ENCODE measurements at regions of chr3 and their contacts with region 1.

Region 1: GRCh38 chr3:195204360-195205163 is 66.4 kb downstream of the XXYLT1 start:
- DNase-seq: peak in 1 of 5 donors; percentile 16
- H3K4me3 ChIP-seq: no peak overlapping the region
- H3K27ac ChIP-seq: no peak overlapping the region
- H3K4me1 ChIP-seq: peaks cover 23% of the 10 kb centered on the region
- H3K27me3 ChIP-seq: no peaks in the 10 kb centered on the region
- CTCF ChIP-seq: no peak
- EP300 ChIP-seq: no peak
- POLR2A ChIP-seq: no peak

Region 2: GRCh38 chr3:195110647-195111318 is 93.8 kb before region 1 on chr3:
- intact Hi-C with region 1: no loop called
- DNase-seq: no peak
- H3K4me3 ChIP-seq: no peak overlapping the region
- H3K27ac ChIP-seq: no peak overlapping the region
- H3K4me1 ChIP-seq: peaks cover 4% of the 10 kb centered on the region
- H3K27me3 ChIP-seq: no peaks in the 10 kb centered on the region
- CTCF ChIP-seq: no peak
- EP300 ChIP-seq: no peak
- POLR2A ChIP-seq: no peak

Region 3: GRCh38 chr3:195154793-195155535 is 49.6 kb before region 1 on chr3:
- intact Hi-C with region 1: loop called in 1 of 4 experiments (anchors 10 kb)
- DNase-seq: peak; percentile 89 to 98 (median 92)
- H3K4me3 ChIP-seq: no peak overlapping the region
- H3K27ac ChIP-seq: peak overlapping the region; percentile 48 to 74
- H3K4me1 ChIP-seq: peaks cover 12% of the 10 kb centered on the region
- H3K27me3 ChIP-seq: no peaks in the 10 kb centered on the region
- CTCF ChIP-seq: no peak
- EP300 ChIP-seq: no peak
- POLR2A ChIP-seq: no peak

Region 4: DNA sequence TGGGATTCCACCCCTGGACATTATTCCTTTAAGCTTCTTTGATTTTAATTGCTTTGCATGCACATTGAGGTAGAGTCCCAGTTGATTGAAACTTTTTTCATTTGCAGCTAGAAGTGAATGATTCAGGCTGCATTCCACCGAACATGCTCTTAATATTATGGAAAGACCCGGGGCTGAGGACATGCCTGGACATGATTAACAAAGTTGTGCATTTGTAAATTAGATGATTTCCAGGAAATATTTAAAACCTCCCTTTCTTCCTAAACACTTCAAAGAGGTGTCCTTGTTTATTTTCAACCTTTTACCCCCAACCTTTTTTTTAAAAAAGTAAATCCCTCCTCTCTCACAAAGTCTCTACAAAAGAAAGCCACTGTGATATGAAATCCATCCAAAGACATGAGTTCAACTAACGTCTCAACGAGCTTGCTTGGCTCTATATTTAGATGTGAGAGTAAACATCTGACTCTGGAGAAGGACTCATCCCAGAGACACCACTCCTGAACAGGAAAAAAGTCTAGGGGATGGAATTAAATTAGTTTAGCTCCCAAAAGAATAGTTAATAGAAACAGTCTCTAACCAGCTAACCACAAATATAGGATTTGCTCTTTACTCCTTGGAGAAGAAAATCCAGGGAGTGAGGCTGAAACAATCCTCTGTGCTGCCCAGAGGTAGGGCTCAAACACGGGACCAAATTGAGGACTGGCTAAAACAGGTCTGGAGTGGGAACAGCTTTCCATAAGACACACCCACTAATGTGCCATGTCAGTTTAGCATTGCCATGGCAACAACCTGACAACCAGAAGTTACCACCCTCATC is 16.7 kb before region 1 on chr3:
- intact Hi-C with region 1: no loop called
- DNase-seq: no peak
- H3K4me3 ChIP-seq: no peak overlapping the region
- H3K27ac ChIP-seq: no peak overlapping the region
- H3K4me1 ChIP-seq: peaks cover 4% of the 10 kb centered on the region
- H3K27me3 ChIP-seq: no peaks in the 10 kb centered on the region
- CTCF ChIP-seq: no peak
- EP300 ChIP-seq: no peak
- POLR2A ChIP-seq: no peak